ENCODE measurements at regions of chr22 and their contacts with region 1.

Region 1: DNA sequence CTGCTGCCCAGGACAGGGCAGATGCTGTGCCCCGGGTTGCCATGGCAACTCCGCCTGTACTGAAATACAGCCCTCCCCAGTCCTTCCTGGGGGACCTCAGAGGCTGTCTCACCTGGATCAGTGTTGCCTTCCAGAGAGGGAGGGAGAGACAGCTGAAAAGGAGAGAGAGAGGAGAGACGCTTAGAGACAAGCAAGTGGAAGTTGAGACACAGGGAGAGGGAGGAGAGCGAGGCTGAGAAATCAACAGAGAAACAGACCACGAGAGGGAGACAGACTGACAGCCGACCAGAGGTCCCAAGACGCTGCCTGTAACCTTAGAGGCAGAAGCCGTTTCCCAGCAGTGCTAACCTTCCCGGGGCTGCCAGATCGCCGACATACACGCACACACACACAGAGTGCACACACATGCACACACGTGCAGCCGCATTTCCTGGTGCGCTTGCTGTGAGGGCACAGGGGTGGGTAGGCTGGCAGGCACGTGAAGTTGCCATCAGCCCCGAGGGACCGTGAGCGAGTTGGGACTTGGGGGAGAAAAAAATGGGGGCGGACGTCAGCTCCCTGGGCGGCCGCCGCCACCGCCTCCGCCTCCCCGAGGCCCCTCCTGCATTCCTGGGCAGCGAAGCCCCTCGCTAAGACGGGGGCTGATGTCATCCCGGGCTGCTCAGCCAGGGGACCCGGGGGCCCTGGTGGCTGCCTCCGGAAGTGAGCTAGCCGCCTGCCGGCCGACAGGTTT is 88.6 kb upstream of the CRYBB3 start:
- DNase-seq: peak; percentile 72
- ATAC-seq: peak; percentile 87
- H3K4me3 ChIP-seq: peak overlapping the region; percentile 45 to 64
- H3K27ac ChIP-seq: peak overlapping the region; percentile 55
- H3K4me1 ChIP-seq: peaks cover 16 to 33% of the 10 kb centered on the region in 2 experiments; a peak in 3 of 4 replicates
- H3K27me3 ChIP-seq: no peaks in the 10 kb centered on the region
- CTCF ChIP-seq: peak; percentile 36 to 59 (median 50); a peak in 5 of 6 replicates
- POLR2A ChIP-seq: no peak
- RAD21 ChIP-seq: peak; percentile 56

Region 2: DNA sequence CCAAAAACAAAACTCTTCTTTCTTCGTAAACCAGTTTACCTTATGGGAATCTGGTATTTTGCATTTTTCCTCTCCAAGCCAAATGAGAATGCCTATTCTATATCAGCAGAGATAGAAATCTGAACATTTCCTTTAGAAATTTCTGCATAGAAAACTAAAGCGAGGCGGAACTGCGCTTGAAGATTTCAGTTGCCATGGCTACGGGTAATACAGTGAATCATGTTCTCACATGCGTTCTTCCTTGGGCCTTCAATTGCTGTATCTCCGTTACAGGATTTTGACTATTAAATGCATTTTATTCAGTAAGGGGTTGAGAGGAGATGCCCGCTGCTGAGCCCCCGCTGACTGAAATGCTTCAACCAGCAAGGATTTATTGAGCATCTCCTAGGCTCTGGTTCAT is 19.6 kb before region 1 on chr22:
- CTCF ChIA-PET with region 1: no interaction called
- POLR2A ChIA-PET with region 1: no interaction called
- RAD21 ChIA-PET with region 1: no interaction called
- intact Hi-C with region 1: no loop called
- DNase-seq: no peak
- ATAC-seq: no peak
- H3K4me3 ChIP-seq: no peak overlapping the region
- H3K27ac ChIP-seq: no peak overlapping the region
- H3K4me1 ChIP-seq: no peaks in the 10 kb centered on the region
- H3K27me3 ChIP-seq: no peaks in the 10 kb centered on the region
- CTCF ChIP-seq: no peak
- POLR2A ChIP-seq: no peak
- RAD21 ChIP-seq: no peak

Region 3: DNA sequence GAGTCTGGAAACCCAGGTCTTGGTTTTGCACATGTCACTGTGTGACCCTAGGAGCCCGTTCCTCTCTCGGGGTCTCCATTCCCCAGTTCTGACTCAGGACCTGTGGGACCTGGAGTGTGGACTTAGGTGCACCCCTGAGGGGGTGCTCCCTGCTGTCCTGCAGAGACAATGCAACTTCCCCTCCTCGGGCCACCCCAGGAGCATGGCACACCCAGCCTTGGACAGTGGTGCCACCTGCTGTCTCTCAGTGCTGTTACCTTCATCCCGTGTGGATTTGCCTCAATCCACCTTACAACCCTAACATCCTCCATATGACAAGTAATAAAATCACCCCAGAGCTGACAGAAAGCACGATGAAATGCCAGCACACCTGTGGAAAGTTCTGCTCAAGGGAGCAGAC is 61.1 kb after region 1 on chr22:
- CTCF ChIA-PET with region 1: interaction called, 4 read pairs
- POLR2A ChIA-PET with region 1: interaction called, 3 read pairs
- RAD21 ChIA-PET with region 1: no interaction called
- intact Hi-C with region 1: loop called (anchors 1 kb)
- DNase-seq: peak; percentile 8
- ATAC-seq: peak; percentile 74
- H3K4me3 ChIP-seq: no peak overlapping the region
- H3K27ac ChIP-seq: no peak overlapping the region
- H3K4me1 ChIP-seq: peaks cover 26 to 27% of the 10 kb centered on the region in 2 experiments
- H3K27me3 ChIP-seq: no peaks in the 10 kb centered on the region
- CTCF ChIP-seq: peak; percentile 59 to 62 (median 59); a peak in 5 of 6 replicates
- POLR2A ChIP-seq: no peak
- RAD21 ChIP-seq: peak; percentile 73

Region 4: DNA sequence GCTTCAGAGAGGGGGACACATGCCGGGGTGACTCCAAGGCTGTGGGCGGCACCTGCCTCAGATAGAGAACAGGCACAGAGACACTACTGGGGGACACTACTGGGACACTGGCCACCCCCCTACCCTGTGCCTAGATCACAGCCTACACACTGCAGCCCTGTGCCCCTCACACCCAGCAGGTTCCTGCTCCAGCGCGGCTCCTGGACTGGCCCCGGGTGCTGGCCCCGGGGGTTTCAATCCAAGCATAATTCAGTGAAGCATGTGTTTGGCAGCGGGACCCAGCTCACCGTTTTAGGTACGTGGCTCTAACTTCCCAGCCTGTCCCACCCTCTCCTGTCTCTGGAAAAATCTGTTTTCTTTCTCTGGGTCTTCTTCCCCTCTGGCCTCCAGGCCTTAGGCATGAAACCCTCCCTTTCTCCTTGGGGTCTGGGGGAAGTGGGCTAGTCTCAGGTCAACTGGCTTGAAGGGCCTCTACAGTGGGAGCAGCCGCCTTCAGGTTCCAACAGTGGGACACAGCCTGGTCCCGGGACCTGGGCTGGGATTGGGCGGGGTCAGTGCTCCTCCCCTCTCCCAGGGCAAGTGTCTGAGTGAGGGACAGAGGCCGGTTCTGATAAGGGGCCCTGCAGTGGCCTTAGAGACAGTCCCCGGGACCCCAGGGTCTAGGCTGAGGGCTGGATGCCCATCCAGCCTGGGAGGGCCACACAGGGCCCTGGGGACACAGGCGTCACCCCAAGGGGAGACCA is 207.2 kb after region 1 on chr22:
- CTCF ChIA-PET with region 1: no interaction called
- POLR2A ChIA-PET with region 1: no interaction called
- RAD21 ChIA-PET with region 1: no interaction called
- intact Hi-C with region 1: no loop called
- DNase-seq: no peak
- ATAC-seq: no peak
- H3K4me3 ChIP-seq: no peak overlapping the region
- H3K27ac ChIP-seq: no peak overlapping the region
- H3K4me1 ChIP-seq: no peaks in the 10 kb centered on the region
- H3K27me3 ChIP-seq: no peaks in the 10 kb centered on the region
- CTCF ChIP-seq: no peak
- POLR2A ChIP-seq: no peak
- RAD21 ChIP-seq: no peak